ENCODE measurements at regions of chr21 and their contacts with region 1.

Region 1: DNA sequence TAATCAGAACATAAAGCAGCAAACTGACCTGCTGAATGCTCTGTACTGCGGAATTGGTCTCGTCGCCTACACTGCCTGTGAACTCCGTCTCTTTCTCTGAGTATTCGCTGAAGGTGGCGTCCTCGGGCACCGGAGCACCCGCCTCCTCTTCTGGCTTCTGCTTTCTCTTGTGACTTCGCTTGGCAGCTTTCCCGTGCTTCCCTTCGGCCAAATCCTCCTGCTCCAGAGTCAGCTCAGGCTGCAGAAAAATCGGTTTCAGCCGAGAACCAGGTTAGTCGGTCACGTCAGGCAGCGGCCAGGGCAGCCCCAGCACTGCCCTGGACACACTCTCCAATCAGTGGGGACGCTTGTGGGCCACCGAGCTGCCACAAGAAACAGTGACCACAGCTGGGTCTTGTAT is 35.8 kb upstream of the RIPK4 start:
- DNase-seq: no peak
- ATAC-seq: no peak
- H3K4me3 Mint-ChIP-seq: no peak overlapping the region
- H3K27ac Mint-ChIP-seq: peak overlapping the region; percentile 45; the same call in 1 of the 2 replicates
- H3K4me1 Mint-ChIP-seq: no peaks in the 10 kb centered on the region
- H3K27me3 Mint-ChIP-seq: no peaks in the 10 kb centered on the region
- CTCF ChIP-seq: no peak

Region 2: DNA sequence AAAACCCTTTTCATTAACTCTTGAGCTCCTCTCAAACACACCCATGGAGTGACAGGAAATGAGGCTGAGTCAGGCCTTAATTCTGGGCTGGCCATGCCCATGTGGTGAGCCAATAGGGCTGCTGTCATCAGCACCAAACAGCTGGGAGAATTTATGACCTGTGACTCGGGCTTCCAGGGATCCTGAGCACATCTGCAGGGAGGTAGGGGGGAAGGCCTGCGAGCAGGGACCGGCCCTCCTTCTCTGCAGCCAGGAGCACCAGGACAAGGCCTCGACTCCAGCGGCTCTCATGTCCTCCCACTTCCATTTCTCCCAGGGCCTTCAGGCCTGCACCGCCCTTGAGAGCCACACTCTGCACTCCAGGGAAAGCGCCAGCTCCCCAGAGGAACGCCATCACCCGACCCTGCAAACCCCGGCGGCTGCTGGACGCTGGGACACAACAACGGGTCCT is 50.4 kb before region 1 on chr21:
- CTCF ChIA-PET with region 1: no interaction called
- POLR2A ChIA-PET with region 1: no interaction called
- DNase-seq: no peak
- ATAC-seq: no peak; the same call in 1 of the 2 replicates
- H3K4me3 Mint-ChIP-seq: no peak overlapping the region
- H3K27ac Mint-ChIP-seq: no peak overlapping the region
- H3K4me1 Mint-ChIP-seq: peaks cover 53% of the 10 kb centered on the region
- H3K27me3 Mint-ChIP-seq: no peaks in the 10 kb centered on the region; the same call in 1 of the 2 replicates
- CTCF ChIP-seq: no peak

Region 3: DNA sequence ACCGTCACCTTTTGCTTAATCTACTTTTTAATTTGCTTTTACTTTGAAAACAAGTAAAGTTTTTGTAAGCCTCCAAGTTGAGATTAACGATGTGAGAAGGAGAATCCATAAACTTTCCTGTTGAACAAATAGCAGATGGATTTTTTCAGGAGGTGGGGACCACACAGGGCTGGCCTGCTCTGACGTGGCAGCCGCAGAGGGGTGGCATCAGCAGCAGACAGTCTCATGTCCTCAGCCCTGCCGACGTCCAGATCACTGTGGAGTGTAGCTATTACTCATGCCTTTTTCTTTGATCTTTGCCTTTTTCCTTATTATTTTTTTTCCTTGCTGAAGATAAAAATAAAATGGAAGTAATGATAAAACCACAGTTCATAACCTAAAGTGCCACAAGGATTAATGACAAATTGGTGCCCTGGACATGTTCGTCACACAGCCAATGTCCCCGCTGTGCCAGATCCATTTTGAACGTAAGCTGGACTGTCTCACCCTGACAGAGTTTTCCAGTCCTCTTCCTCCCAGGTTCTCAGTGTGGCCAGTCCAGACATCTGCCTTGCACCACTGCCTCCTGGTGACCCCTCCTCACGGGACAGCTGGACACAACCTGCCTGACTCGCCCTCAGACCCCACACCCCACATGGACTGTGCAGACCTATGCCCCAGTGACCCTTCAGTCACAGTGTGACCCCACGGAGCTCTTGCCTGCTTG is 222.8 kb after region 1 on chr21:
- CTCF ChIA-PET with region 1: no interaction called
- POLR2A ChIA-PET with region 1: interaction called, 11 read pairs
- DNase-seq: no peak
- ATAC-seq: no peak
- H3K4me3 Mint-ChIP-seq: no peak overlapping the region
- H3K27ac Mint-ChIP-seq: no peak overlapping the region
- H3K4me1 Mint-ChIP-seq: peaks cover 11% of the 10 kb centered on the region
- H3K27me3 Mint-ChIP-seq: no peaks in the 10 kb centered on the region
- CTCF ChIP-seq: no peak

Measured in WTC11 (cell line).